Endothelial cell of umbilical vein (primary cell): ENCODE measurements at regions of chr1 and their contacts with region 1.

Region 1: DNA sequence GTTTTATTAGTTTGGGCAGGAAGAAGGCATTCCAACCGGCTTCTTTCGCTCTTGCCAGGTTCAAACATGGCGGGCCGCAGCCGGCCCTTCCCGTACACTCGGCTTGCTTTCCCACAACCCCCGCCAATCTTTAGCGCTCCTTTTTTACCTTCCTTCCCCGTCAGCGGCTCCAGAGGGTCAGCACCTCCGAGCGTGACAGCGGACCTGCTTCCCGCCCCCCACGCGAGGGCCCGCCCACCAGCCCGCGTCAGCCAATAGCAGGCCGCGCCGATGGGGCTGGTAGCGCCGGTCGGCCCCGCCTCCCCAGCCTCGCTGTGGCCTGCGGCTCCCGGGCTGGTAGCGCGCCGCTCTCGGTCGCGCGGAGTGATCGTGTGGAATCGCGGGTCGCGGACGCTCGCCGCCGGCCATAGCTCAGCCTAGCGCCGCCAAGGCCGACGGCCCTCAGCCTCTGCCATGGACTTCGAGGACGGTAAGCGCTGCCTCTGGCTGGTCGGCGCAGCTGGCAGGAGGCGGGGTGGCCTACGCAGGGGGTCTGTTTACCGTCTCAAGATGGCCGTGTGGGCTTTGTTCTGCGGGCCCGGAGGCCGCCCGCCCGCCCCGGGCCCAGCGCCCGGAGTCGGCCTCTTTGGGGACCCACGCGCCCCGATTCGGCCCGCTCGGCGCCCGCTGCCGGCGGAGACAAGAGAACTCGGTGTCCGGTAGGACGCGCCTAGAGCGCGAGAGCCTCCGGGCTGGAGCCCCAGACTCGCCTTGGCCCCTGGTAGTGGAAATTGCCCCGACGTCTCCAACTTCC is at the start of gene ZNF326:
- DNase-seq: peak; percentile 98
- H3K4me3 ChIP-seq: peak within 1 kb of the TSS; percentile 89 to 99 (median 98)
- H3K27ac ChIP-seq: peak within 1 kb of the TSS; percentile 94
- H3K4me1 ChIP-seq: peaks cover 19% of the 10 kb centered on the region
- H3K27me3 ChIP-seq: no peaks in the 10 kb centered on the region
- CTCF ChIP-seq: no peak
- POLR2A ChIP-seq: peak; percentile 98
- total RNA-seq, gene ZNF326: 29.7 and 29.9 TPM in 2 replicates

Region 2: DNA sequence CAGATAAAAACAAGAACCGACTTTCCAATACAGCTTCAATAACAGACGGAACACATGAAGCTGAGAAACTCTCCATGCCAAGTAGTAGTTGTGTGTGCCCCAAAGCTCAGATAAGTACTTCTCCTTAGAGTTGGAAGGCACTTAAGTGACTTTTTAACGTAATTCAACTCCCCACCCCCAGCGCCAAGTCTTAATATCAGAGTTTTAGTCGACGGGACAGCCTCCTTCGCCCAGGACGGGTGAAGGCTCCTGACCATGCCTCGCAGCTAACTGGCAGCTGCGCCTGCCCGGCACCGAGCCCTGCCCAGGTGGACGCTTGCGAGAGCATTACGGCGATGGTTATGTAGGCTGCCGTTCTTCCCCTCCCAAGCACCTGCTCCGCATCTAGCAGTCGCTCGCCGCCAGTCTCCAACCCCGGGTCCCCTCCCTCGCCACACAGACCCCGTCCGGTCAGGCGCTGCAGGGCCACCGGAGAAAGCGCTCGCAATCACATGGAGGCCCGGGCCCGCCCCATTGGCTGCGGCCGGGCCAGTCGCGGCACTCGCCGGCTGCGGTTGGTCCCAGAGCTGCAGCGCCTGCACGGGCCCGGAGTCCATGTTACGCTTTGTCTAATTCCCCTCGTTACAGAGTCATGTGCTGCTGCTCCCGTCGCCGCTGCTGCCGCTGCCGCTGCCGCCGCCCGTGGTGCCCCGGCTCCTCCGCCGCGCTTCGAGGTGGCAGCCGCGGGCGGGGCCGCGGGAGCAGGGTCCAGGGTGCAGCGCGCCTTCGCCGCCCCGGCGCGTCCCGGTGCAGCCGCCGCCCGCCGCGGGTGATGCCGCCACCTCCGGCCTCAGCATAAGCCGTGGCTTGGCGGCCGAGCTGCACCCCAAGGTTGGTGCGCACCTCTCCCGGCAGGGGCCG is 174.3 kb before region 1 on chr1 and contains the start of gene LRRC8D:
- CTCF ChIA-PET with region 1: interaction called, 3 read pairs
- POLR2A ChIA-PET with region 1: no interaction called
- dilution Hi-C with region 1: no loop called
- intact Hi-C with region 1: loop called (anchors 2 kb)
- DNase-seq: peak; percentile 85
- H3K4me3 ChIP-seq: peak within 1 kb of the TSS; percentile 70 to 94 (median 74)
- H3K27ac ChIP-seq: no peak within 1 kb of the TSS
- H3K4me1 ChIP-seq: peaks cover 11% of the 10 kb centered on the region
- H3K27me3 ChIP-seq: peaks cover 0 to 1% of the 10 kb centered on the region in 2 experiments
- CTCF ChIP-seq: no peak
- POLR2A ChIP-seq: peak; percentile 17
- total RNA-seq, gene LRRC8D: 23.6 and 37.7 TPM in 2 replicates

Region 3: DNA sequence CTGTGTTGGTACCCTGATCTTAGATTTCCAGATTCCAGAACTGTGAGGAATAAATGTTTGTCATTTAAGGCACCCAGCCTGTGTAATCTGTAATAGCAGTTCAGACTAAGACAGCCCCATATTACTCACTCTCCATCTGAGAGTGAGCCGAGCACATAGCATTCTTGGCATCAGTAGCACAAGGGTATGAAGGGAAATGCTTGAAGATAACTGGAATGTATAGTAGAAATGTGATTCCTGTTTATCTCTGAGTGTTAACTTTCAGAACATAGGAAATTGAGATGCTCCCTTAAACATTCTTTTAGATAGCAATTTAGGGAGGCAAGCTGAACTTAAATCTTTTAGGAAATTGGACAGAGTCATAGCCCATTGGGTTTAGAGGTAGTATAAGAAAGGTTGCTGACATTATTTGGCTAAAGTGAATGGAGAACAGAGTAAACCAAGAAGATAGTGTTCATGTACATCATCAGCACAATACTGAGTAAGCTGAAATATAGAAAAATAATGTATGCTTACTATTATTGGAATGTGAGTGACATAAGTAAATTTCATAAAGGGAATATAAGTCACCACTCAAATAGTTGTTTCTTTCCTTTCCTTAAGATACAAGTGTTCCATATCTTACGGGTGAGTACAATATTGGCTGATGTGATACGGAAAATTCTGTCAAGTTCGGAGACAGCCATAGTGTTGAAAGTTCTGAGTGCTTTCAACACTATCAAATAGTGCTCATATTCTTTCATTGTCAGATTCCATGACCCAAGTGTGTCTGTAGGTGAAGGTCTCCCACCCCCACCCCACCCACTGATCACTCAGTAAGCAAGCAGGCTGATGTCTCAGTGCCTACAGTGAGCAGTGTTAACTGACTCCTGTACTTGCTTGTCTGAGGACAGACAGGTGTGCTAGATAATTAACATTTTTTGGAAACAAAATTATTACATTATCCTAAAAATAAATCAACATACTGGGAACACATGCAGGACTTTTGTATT is 100.5 kb before region 1 on chr1:
- CTCF ChIA-PET with region 1: no interaction called
- POLR2A ChIA-PET with region 1: no interaction called
- dilution Hi-C with region 1: no loop called
- intact Hi-C with region 1: no loop called
- DNase-seq: peak; percentile 86
- H3K4me3 ChIP-seq: peak overlapping the region in 1 of 3 experiments; percentile 1
- H3K27ac ChIP-seq: peak overlapping the region; percentile 73
- H3K4me1 ChIP-seq: peaks cover 59% of the 10 kb centered on the region
- H3K27me3 ChIP-seq: no peaks in the 10 kb centered on the region
- CTCF ChIP-seq: no peak
- POLR2A ChIP-seq: peak; percentile 37